A549 (cell line): ENCODE measurements at regions of chr3 and their contacts with region 1.

Region 1: DNA sequence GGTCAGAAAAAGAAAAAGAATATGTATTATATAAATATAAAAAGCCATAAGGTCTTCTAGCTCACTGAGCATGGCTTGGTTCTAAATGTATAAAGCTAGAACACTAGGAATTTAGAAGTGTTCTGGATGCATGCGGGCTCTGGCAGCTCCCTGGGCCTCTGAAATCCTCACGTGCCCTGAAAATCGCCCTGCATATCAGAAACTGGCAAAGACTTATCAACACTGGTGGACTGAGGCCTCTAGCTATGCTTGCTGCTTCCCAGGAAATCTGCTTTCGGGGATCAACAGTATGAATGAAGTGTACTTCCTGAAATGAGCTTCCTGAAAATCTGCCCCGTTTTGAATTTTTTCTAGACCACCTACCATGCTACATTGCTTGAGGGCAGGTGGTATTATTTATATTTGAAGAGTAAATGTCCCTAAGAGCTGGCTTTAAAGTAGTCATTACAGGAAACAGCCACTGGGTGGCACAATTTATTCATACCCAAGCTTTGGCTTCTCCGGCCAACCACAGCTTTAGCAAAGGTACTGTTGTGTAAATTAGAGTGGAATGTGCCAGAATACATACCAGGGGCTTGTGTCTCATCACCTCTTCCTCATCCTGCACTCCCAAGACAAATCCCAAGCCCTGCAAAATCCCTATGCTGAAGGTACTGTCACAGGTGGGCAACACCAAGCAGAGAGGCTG is 17.7 kb downstream of the CRTAP start:
- DNase-seq: peak; percentile 67 to 77
- ATAC-seq: peak; percentile 87 to 92
- H3K4me3 ChIP-seq: no peak overlapping the region
- H3K27ac ChIP-seq: no peak overlapping the region
- H3K4me1 ChIP-seq: 0 out of 3 replicates have a peak, but pooled peaks cover 5% of the 10 kb centered on the region
- CTCF ChIP-seq: peak; percentile 87
- EP300 ChIP-seq: no peak
- POLR2A ChIP-seq: no peak
- RAD21 ChIP-seq: peak; percentile 87 to 89

Region 2: GRCh38 chr3:33119891-33120290 is 11.6 kb before region 1 on chr3:
- CTCF ChIA-PET with region 1: interaction called, 31 read pairs
- POLR2A ChIA-PET with region 1: no interaction called
- DNase-seq: no peak
- ATAC-seq: no peak
- H3K4me3 ChIP-seq: no peak overlapping the region
- H3K27ac ChIP-seq: no peak overlapping the region
- H3K4me1 ChIP-seq: peaks cover 21% of the 10 kb centered on the region
- CTCF ChIP-seq: no peak
- EP300 ChIP-seq: no peak
- POLR2A ChIP-seq: no peak
- RAD21 ChIP-seq: no peak

Region 3: GRCh38 chr3:33159981-33160380 is 28.5 kb after region 1 on chr3:
- CTCF ChIA-PET with region 1: no interaction called
- POLR2A ChIA-PET with region 1: no interaction called
- DNase-seq: no peak
- ATAC-seq: no peak
- H3K4me3 ChIP-seq: no peak overlapping the region
- H3K27ac ChIP-seq: no peak overlapping the region
- H3K4me1 ChIP-seq: no peaks in the 10 kb centered on the region
- CTCF ChIP-seq: no peak
- EP300 ChIP-seq: no peak
- POLR2A ChIP-seq: no peak
- RAD21 ChIP-seq: no peak

Region 4: DNA sequence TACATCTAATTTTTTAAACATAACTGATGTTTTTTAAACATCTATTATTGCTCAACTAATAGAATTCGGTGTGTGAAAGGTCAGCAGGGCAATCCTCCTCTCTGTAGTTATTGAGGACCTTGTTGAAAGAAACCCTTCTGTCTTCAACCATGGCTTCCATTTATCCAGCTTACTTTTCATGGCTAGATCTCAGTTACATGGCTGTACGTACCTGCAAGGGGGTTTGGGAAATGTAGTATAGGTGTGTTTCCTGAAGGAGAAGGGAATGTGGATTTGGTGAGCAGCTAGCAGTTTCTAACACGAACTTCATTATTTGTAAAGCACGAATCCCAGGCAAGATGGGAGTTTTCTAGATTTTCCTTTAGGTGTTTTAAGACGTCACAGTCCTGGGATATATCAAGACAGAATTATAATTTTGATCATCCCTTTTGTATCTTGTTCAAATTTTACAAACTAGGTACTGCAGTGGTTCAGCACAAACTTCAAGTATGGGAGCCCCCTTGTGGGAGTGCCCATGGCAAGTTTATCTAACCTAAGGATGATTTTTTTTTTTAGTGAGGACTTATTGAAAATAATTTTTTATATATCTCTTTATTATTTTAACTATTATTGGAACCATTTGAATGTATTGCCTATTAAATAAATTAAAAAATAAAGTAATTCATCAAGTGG is 187.4 kb after region 1 on chr3:
- CTCF ChIA-PET with region 1: interaction called, 10 read pairs
- POLR2A ChIA-PET with region 1: no interaction called
- DNase-seq: peak in 1 of 2 experiments; percentile 18
- ATAC-seq: peak in 1 of 2 experiments; percentile 62; a peak in 3 of 6 replicates
- H3K4me3 ChIP-seq: no peak overlapping the region
- H3K27ac ChIP-seq: 0 out of 6 replicates have a peak overlapping the region, but pooled peaks of 1 of the 2 experiments have one; percentile 9
- H3K4me1 ChIP-seq: peaks cover 55% of the 10 kb centered on the region
- CTCF ChIP-seq: peak; percentile 34
- EP300 ChIP-seq: no peak
- POLR2A ChIP-seq: no peak
- RAD21 ChIP-seq: peak in 1 of 2 experiments; percentile 26; a peak in 2 of 5 replicates

Region 5: GRCh38 chr3:33385423-33385822 is 253.9 kb after region 1 on chr3:
- CTCF ChIA-PET with region 1: interaction called, 10 read pairs
- POLR2A ChIA-PET with region 1: no interaction called
- DNase-seq: peak in 1 of 2 experiments; percentile 12
- ATAC-seq: no peak
- H3K4me3 ChIP-seq: no peak overlapping the region
- H3K27ac ChIP-seq: no peak overlapping the region
- H3K4me1 ChIP-seq: peaks cover 24% of the 10 kb centered on the region
- CTCF ChIP-seq: no peak
- EP300 ChIP-seq: no peak
- POLR2A ChIP-seq: no peak
- RAD21 ChIP-seq: no peak